ENCODE measurements at regions of chr4 and their contacts with region 1.

Region 1: DNA sequence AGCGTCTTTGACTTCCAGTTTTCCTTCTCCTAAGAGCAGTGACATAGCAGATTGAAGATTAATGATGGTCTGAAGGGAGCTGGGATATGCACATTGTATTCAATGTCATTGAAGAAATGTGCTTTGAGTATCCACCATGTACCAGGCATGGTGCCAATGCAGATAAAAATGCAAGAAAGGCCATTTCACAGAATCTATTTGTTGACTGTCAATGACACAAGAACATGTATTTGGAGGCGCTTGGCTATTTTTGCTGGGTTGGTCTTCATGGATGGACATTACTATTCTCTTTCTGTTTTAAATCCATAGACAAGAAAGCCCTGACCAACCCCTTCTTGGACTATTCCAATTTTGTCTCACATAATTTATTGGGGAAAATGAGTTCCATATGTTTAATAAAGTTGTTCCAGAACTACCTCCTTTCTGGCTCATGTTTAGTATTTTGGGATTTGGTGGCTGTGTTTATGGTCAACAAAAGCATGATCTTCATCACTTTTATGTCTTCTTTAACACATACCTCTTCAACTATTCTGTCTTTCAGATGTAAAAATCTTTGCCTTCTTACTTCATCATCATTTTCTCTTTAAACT is 174.5 kb downstream of the CPE start:
- DNase-seq: no peak
- H3K4me3 ChIP-seq: no peak overlapping the region
- H3K27ac ChIP-seq: no peak overlapping the region
- H3K4me1 ChIP-seq: no peaks in the 10 kb centered on the region
- H3K27me3 ChIP-seq: no peaks in the 10 kb centered on the region
- CTCF ChIP-seq: no peak
- POLR2A ChIP-seq: no peak

Region 2: GRCh38 chr4:165493359-165493758 is 60.0 kb before region 1 on chr4:
- intact Hi-C with region 1: loop called (anchors 2 kb)
- DNase-seq: peak in 1 of 2 donors; percentile 55
- H3K4me3 ChIP-seq: peak overlapping the region in 1 of 3 donors; percentile 9
- H3K27ac ChIP-seq: no peak overlapping the region
- H3K4me1 ChIP-seq: no peaks in the 10 kb centered on the region
- H3K27me3 ChIP-seq: no peaks in the 10 kb centered on the region
- CTCF ChIP-seq: peak in 2 of 3 donors; percentile 16 to 57
- POLR2A ChIP-seq: no peak